ENCODE measurements at regions of chr19 and their contacts with region 1.

Region 1: DNA sequence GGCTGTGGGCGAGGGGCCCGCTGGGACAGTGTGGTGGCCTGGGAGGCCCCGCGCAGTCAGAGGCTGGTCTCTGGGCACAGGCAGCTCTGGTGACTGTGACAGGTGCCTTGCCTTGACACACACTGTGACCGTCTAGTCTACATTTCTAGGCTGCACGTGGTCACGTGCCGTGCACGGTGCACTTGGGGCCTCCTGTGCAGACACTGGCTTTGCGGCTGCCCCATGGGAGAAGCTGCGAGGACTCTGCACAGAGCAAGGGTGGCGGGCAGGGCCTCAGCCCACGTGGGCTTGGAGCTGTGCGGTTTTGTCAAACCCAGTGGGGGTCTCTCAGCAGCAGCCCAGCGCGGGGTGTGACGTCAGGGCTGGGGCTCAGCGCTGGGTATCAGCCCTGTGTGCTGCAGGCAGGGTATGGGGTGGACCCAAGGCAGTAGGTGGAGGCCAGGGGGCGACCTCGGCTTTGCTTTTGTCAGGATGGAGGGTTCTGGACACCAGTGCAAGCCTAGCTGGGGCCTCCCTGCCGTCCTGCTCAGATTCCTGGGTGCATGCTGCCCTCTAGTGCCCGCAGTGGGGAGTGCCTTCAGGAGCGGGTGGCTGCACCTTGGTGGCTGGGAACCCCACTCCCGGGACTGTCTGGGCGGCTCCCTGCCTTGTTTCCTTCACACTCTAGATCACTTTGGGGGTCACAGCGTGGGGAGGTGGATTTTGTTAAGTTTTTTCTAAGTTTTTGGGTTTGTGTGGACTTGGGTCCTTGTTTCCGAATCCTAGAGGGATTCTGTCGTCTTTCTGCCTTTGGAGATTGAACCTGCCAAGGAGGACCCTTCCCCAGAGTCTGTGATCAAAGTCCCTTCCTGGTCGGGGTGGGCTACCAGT is 62.6 kb downstream of the KDM4B start:
- DNase-seq: peak; percentile 95

Region 2: DNA sequence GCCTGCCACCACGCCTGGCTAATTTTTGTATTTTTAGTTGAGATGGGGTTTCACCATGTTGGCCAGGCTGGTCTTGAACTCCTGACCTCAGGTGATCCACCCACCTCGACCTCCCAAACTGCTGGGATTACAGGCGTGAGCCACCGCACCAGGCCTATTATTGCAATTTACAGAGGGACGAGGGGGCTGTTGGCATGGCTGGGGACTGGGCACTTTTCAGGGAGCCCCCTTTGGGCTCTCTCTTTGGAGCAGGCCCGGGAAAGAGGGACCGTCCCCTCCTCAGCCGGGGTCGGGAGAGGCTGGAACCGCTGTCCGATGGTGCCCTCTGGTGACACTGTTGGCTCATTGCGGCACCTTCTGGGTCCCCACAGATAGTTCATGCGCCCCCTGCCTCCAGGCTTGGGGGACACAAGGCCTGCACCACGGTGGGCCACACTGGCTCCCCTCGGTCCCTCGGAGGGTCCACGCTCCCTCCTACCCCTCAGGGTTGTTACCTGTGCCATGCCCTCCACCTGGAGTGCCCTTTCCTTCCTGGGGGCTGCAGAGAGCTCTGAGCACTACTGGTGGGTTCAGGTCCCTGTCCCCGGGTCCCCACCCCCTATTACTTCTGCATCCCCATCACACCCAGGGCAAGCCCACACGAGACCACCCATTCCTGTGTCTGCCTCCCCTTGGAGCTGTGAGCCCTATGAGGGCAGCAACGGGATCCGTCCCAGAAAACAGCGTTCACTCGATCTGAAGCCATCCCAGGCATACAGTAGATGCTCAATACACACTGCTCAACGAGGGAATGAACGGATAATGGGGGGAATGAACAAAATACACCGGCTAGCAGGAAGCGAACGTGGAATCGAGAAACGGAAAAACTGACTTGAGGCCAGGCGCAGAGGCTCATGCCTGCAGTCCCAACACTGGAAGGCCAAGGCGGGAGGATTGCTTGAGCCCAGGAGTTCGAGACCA is 227.4 kb before region 1 on chr19:
- intact Hi-C with region 1: loop called in 1 of 2 experiments (anchors 5 kb)
- DNase-seq: peak; percentile 84

Region 3: DNA sequence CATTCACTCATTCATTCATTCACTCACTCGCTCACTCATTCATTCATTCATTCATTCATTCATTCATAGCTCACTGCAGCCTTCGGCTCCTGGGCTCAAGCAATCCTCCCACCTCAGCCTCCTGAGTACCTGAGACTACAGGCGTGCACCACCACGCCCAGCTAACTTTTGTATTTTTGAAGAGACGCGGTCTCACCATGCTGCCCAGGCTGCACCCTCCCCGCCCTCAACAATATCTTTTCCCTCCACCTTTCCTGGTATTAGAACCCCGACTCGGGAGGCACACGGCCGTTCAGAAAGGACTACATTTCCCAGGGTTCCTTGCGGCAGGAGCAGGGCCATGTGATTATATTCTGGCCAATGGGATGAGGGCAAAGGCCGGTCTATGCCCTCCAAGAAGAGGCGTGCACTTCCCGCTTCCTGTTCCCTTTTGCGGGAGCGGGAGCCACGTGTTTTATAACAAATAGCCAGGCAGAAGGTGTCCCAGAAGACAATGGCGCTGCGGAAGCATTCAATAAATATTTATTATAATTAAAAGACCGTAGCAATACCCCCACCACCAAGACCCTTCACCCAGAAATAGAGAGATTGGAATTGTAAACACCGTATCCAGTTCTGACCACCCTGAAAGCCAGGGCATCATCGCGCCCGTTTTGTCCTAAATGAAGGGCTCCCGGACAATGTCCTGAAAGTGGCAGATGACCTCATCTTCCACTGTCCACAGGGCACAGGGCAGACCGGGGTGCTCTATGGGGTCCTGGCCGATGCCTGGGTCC is 215.9 kb before region 1 on chr19:
- intact Hi-C with region 1: loop called in 1 of 2 experiments (anchors 10 kb)
- DNase-seq: peak; percentile 94

Region 4: GRCh38 chr19:4877753-4878490 is 153.5 kb before region 1 on chr19:
- intact Hi-C with region 1: loop called in 1 of 2 experiments (anchors 5 kb)
- DNase-seq: no peak

Region 5: GRCh38 chr19:4976401-4977298 is 54.8 kb before region 1 on chr19:
- intact Hi-C with region 1: loop called in 1 of 2 experiments (anchors 5 kb)
- DNase-seq: peak; percentile 94